CD4-positive, alpha-beta T cell (primary cell): ENCODE measurements at regions of chr5 and their contacts with region 1.

Region 1: DNA sequence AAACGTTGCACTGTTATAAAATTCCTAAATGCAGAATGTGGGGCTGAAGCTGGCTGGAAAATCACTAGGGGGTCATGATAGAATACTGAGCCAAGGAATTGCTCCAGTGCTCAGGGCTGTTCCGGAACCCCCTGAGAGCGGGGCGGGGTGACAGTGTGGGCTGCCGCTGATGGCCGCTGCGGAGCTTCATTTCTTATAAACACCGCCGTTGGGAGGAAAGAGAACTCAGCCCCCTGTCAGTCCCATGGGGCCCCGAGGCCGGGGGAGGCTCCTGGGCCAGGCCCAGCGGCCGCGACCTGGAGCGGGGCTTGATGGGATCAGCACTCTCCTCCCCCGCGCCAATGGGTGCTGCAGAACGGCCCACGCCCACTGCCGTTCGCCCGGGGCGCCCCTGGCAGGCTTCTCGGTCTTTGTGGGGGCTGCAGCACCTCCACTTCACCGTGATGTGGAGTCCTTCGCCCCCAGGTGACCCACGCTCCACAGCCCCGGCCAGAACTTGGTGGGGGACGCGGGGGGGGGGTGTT is 5.2 kb upstream of the IRF1 start:
- DNase-seq: peak; percentile 44 to 83 (median 60)
- ATAC-seq: peak; percentile 28
- H3K4me3 ChIP-seq: peak overlapping the region; percentile 93
- H3K4me3 Mint-ChIP-seq: peak overlapping the region; percentile 97
- H3K27ac ChIP-seq: peak overlapping the region; percentile 82 to 93
- H3K27ac Mint-ChIP-seq: peak overlapping the region; percentile 97
- H3K4me1 ChIP-seq: peaks cover 86% of the 10 kb centered on the region
- H3K4me1 Mint-ChIP-seq: peaks cover 66% of the 10 kb centered on the region
- H3K27me3 ChIP-seq: no peaks in the 10 kb centered on the region
- H3K27me3 Mint-ChIP-seq: no peaks in the 10 kb centered on the region
- CTCF ChIP-seq: no peak

Region 2: GRCh38 chr5:132369474-132370180 is 126.1 kb before region 1 on chr5 and contains the start of gene SLC22A5:
- CTCF ChIA-PET with region 1: interaction called, 3 read pairs
- POLR2A ChIA-PET with region 1: interaction called, 22 read pairs
- intact Hi-C with region 1: no loop called
- DNase-seq: peak; percentile 40 to 88 (median 70)
- ATAC-seq: peak; percentile 94
- H3K4me3 ChIP-seq: peak within 1 kb of the TSS; percentile 68
- H3K4me3 Mint-ChIP-seq: peak within 1 kb of the TSS; percentile 91
- H3K27ac ChIP-seq: peak within 1 kb of the TSS; percentile 24 to 41
- H3K27ac Mint-ChIP-seq: peak within 1 kb of the TSS; percentile 60
- H3K4me1 ChIP-seq: peaks cover 35% of the 10 kb centered on the region
- H3K4me1 Mint-ChIP-seq: peaks cover 26% of the 10 kb centered on the region
- H3K27me3 ChIP-seq: no peaks in the 10 kb centered on the region
- H3K27me3 Mint-ChIP-seq: no peaks in the 10 kb centered on the region
- CTCF ChIP-seq: no peak
- total RNA-seq, gene SLC22A5: 4.3 to 4.5 TPM

Region 3: GRCh38 chr5:132394667-132395259 is 101.0 kb before region 1 on chr5:
- CTCF ChIA-PET with region 1: interaction called, 104 read pairs
- POLR2A ChIA-PET with region 1: interaction called, 94 read pairs
- intact Hi-C with region 1: no loop called
- DNase-seq: no peak
- ATAC-seq: no peak
- H3K4me3 ChIP-seq: no peak overlapping the region
- H3K4me3 Mint-ChIP-seq: no peak overlapping the region
- H3K27ac ChIP-seq: no peak overlapping the region
- H3K27ac Mint-ChIP-seq: peak overlapping the region; percentile 84
- H3K4me1 ChIP-seq: peaks cover 60% of the 10 kb centered on the region
- H3K4me1 Mint-ChIP-seq: peaks cover 76% of the 10 kb centered on the region
- H3K27me3 ChIP-seq: no peaks in the 10 kb centered on the region
- H3K27me3 Mint-ChIP-seq: no peaks in the 10 kb centered on the region
- CTCF ChIP-seq: no peak

Region 4: GRCh38 chr5:132419502-132420468 is 75.9 kb before region 1 on chr5:
- CTCF ChIA-PET with region 1: interaction called, 8 read pairs
- POLR2A ChIA-PET with region 1: interaction called, 645 read pairs
- intact Hi-C with region 1: loop called (anchors 1 to 2 kb)
- DNase-seq: peak; percentile 27 to 84 (median 54)
- ATAC-seq: peak; percentile 76
- H3K4me3 ChIP-seq: peak overlapping the region; percentile 37
- H3K4me3 Mint-ChIP-seq: peak overlapping the region; percentile 85
- H3K27ac ChIP-seq: peak overlapping the region; percentile 81 to 88
- H3K27ac Mint-ChIP-seq: peak overlapping the region; percentile 92
- H3K4me1 ChIP-seq: peaks cover 91% of the 10 kb centered on the region
- H3K4me1 Mint-ChIP-seq: peaks cover 94% of the 10 kb centered on the region
- H3K27me3 ChIP-seq: no peaks in the 10 kb centered on the region
- H3K27me3 Mint-ChIP-seq: no peaks in the 10 kb centered on the region
- CTCF ChIP-seq: peak; percentile 85

Region 5: GRCh38 chr5:132437604-132438266 is 58.0 kb before region 1 on chr5:
- CTCF ChIA-PET with region 1: interaction called, 5 read pairs
- POLR2A ChIA-PET with region 1: interaction called, 645 read pairs
- intact Hi-C with region 1: no loop called
- DNase-seq: peak; percentile 25 to 87 (median 62)
- ATAC-seq: peak; percentile 96
- H3K4me3 ChIP-seq: peak overlapping the region; percentile 21
- H3K4me3 Mint-ChIP-seq: peak overlapping the region; percentile 42
- H3K27ac ChIP-seq: peak overlapping the region; percentile 67 to 72
- H3K27ac Mint-ChIP-seq: peak overlapping the region; percentile 90
- H3K4me1 ChIP-seq: peaks cover 87% of the 10 kb centered on the region
- H3K4me1 Mint-ChIP-seq: peaks cover 89% of the 10 kb centered on the region
- H3K27me3 ChIP-seq: no peaks in the 10 kb centered on the region
- H3K27me3 Mint-ChIP-seq: no peaks in the 10 kb centered on the region
- CTCF ChIP-seq: no peak

Region 6: DNA sequence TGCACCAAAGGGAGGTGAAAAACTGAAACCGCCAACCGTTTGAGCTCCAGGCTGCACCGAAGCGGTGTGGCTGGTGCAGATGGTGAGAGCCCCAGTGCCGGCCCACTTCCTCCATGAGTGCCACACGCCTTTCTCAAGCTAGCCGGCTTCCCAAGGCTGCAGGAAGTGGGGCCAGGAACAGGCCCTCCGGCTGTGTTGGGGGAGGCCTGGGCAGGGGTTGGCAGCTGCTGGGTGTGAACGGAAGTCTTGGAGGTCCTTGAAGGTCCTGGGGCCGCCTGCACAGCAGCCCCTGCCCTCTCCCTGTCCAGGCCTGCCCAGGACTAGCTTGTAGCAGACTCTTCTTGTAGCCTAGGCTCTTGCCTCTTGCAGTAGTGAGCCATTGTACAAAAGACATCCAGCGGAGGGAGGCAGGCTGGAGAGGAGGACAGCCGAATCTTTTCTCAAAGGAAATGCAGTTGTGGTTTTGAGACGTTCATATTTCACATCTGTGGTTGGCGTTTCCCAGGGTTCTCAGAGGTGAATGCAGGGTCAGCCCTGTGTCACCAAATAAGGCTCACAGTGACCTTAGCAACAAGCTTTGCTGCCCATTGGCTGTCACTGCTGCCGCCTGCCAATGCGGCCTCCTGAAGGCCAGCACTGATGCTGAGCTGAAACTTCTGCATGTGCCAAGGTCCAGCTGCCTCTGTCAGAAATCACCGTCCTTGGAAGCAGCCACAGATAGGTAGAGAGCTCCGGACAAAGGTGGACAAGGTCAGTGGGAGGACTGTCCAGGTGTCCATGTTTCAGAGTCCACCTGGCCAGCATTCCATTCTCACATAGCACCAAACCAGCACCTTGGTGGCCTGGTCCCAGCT is 29.1 kb before region 1 on chr5:
- CTCF ChIA-PET with region 1: interaction called, 30 read pairs
- POLR2A ChIA-PET with region 1: interaction called, 1,045 read pairs
- intact Hi-C with region 1: no loop called
- DNase-seq: peak in 13 of 14 experiments; percentile 56 to 90 (median 66)
- ATAC-seq: peak; percentile 63
- H3K4me3 ChIP-seq: peak overlapping the region; percentile 34
- H3K4me3 Mint-ChIP-seq: peak overlapping the region; percentile 85
- H3K27ac ChIP-seq: peak overlapping the region; percentile 69 to 73
- H3K27ac Mint-ChIP-seq: peak overlapping the region; percentile 97
- H3K4me1 ChIP-seq: peaks cover 88% of the 10 kb centered on the region
- H3K4me1 Mint-ChIP-seq: peaks cover 99% of the 10 kb centered on the region
- H3K27me3 ChIP-seq: no peaks in the 10 kb centered on the region
- H3K27me3 Mint-ChIP-seq: no peaks in the 10 kb centered on the region
- CTCF ChIP-seq: no peak

Region 7: GRCh38 chr5:132746954-132747615 is 251.4 kb after region 1 on chr5 and contains the start of gene CCNI2:
- CTCF ChIA-PET with region 1: no interaction called
- POLR2A ChIA-PET with region 1: interaction called, 13 read pairs
- intact Hi-C with region 1: no loop called
- DNase-seq: peak; percentile 40 to 88 (median 67)
- ATAC-seq: peak; percentile 86
- H3K4me3 ChIP-seq: peak within 1 kb of the TSS; percentile 55
- H3K4me3 Mint-ChIP-seq: peak within 1 kb of the TSS; percentile 88
- H3K27ac ChIP-seq: peak within 1 kb of the TSS; percentile 12 to 64
- H3K27ac Mint-ChIP-seq: peak within 1 kb of the TSS; percentile 85
- H3K4me1 ChIP-seq: peaks cover 14% of the 10 kb centered on the region
- H3K4me1 Mint-ChIP-seq: peaks cover 24% of the 10 kb centered on the region
- H3K27me3 ChIP-seq: no peaks in the 10 kb centered on the region
- H3K27me3 Mint-ChIP-seq: no peaks in the 10 kb centered on the region
- CTCF ChIP-seq: peak; percentile 58
- total RNA-seq, gene CCNI2: 7.2 to 8.8 TPM